Breast epithelium (tissue), 4 donors: ENCODE measurements at regions of chr6 and their contacts with region 1.

Region 1: DNA sequence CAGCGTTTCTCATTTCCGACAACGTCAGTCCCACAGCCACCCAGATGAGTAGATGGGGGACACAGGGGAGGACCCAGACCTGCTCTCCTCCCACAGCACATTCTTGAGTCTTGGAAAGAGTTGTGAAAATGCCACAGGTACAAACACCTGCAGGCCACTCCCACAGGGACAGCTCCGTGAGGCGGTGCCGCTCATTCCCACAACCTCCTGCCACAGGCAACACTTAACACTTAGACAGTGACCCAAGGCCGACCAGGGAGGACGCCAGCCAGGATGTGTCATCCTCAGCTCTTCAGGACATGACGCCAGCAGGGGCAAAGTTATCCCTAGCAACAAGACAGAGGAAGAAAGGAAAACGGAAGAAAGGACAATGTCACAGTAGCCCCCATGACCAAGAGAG is 22.9 kb upstream of the HLA-B start:
- DNase-seq: no peak
- H3K4me3 ChIP-seq: no peak overlapping the region
- H3K27ac ChIP-seq: no peak overlapping the region
- H3K4me1 ChIP-seq: no peaks in the 10 kb centered on the region
- H3K27me3 ChIP-seq: no peaks in the 10 kb centered on the region
- CTCF ChIP-seq: no peak
- POLR2A ChIP-seq: no peak

Region 2: DNA sequence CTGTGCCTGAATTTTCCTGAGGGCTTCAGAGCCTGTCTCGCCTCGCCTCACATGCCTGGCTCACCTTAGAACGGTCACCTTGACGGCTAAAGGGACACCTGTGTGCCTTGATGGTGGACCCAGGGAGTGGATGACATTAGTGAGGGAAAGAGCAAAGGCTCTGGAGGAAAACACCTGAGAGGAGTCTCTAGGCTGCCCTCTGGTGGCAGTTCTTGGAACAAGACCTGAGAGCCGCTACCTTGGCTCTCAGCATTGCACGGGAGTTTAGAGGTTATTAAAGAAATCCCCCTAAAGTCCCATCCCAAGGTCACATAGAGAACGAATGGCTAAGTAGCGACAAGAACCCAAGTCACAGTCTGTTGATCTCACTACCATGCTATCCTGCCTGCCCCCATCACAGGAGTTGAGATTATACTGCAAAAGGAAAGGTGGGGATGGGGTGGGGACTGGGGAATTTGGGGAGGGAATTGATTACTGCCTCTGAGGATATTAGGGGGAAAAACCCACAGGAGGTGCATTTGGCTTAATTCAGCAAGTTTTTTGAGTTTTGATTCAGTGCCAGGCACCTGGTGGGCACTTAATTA is 251.7 kb before region 1 on chr6:
- intact Hi-C with region 1: loop called (anchors 10 kb)
- DNase-seq: peak in 1 of 2 donors; percentile 70
- H3K4me3 ChIP-seq: no peak overlapping the region
- H3K27ac ChIP-seq: no peak overlapping the region
- H3K4me1 ChIP-seq: peaks cover 0 to 6% of the 10 kb centered on the region in 2 donors
- H3K27me3 ChIP-seq: no peaks in the 10 kb centered on the region
- CTCF ChIP-seq: peak; percentile 64 to 76 (median 66)
- POLR2A ChIP-seq: no peak